ENCODE measurements at regions of chr5 and their contacts with region 1.

Region 1: DNA sequence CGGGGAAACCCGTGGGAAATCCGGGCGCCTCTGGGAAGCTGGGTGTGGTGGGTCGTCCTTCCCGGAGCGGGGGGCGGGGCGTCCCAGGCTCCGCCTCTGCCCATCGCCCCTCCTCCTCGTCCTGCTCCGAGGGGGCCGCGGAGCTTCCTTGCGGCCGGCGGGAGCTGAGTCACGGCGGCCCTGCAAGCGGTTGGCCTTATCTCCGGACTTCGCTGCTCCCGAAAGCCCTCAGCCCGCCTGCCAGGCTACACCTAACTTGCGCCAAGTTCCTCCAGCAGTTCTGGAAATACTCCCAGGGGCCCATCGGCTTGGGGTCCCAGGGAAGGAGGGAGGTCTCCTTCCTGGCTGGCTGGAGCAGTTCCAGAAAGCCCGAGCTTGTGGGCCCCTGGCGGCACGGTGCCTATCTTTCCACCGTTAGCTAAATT is 54.1 kb upstream of the CDKN2AIPNL start:
- DNase-seq: peak; percentile 95
- ATAC-seq: peak; percentile 90

Region 2: GRCh38 chr5:134411546-134412266 is 54.1 kb before region 1 on chr5 and contains the start of gene CDKN2AIPNL:
- intact Hi-C with region 1: loop called (anchors 5 kb)
- DNase-seq: peak; percentile 96
- ATAC-seq: peak; percentile 100
- total RNA-seq, gene CDKN2AIPNL: 43.1 TPM

Region 3: GRCh38 chr5:134506054-134507039 is 40.5 kb after region 1 on chr5:
- intact Hi-C with region 1: loop called (anchors 5 kb)
- DNase-seq: peak; percentile 85
- ATAC-seq: peak; percentile 94

Measured in Right ventricle myocardium superior (tissue), 1 donor.